Sciatic nerve (tissue), 2 donors: ENCODE measurements at regions of chr2 and their contacts with region 1.

Region 1: GRCh38 chr2:162007447-162008040 is 66.5 kb downstream of the DPP4 start:
- DNase-seq: no peak
- ATAC-seq: no peak

Region 2: DNA sequence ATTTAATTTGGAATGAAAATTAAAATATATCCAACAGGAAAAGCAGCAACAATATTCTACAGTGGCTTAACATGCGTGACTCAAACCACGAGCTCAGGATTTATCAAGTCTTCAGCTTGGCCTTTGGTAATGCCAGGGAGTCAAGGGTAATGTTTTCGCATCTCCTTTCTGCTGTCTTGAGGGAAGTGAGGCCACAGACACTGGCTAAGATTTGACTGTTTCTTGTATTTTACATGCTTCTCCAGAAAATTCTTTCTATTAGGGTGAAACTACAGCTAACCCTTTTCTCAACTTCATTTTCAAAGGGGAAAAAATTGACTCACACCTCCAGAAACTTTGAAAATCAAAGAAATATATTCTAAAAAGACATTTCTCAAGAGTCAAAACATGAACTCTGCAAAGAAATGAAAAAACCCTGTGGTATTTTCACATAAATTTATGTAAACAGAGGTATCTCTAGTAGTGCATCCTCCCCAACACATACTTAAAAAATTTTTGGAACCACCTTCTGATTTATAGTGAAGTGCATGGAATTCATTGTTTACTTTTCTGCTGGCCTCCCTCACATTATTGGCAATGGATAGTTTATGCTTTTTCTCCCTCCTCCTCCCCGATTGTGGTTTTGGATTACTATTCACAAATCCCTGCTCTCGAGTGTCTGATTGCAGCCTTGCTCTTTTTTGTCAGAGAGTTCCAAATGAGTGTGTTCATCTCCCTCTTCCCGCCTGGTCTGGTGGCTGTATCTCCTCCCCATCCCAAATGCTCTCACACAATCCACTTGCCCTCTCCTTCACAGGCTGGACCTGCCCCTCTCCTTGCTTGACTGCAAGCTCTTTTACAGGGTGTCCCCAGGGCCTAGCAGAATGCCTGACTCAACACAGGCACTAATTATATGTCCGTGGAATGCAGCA is 17.8 kb after region 1 on chr2:
- intact Hi-C with region 1: no loop called
- DNase-seq: no peak
- ATAC-seq: peak; percentile 21

Region 3: DNA sequence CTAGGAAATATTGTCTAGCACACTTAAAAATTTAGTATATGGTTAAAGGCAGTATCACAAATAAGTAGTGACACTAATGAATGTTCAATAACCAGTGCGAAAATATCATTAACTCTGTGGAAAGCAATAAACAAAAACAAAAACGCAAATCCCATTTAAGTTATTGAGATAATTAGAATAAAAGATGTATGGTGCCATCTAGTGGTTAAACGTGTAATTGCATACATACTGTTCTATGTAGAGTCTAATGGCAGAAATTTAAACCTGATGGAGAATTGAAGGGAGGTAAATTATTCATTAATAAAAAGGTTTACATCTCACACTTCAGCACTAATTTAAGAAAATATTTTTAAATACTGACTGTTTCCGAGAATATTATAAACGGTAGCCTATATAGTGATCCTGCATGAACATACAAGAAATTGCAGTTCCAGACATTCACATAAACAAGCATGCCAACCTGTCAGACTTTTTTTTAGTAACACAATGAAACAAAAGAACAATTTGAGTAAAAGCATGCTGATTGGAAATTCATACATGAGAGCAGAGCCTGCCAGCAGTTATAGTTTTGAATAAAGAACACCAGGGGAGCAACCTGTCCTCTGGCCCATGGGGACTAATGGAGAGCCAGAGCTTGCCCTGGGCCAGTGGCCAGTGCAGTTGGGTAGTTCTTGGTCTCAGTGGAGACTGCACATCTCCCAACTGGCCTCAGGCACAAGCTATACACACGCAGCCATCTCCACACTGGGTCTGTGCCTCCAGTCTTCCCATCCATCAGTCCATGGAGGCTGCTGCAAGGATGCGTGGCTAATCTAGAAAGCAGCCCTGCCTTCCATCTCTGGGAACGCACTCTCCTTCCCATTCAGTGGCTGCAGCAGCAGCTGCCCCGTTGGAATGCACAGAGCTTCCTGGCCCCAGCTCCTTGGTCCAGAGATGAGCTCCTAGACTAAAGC is 116.5 kb after region 1 on chr2:
- intact Hi-C with region 1: loop called (anchors 10 kb)
- DNase-seq: no peak
- ATAC-seq: peak; percentile 54